Sigmoid colon (tissue), 7 donors: ENCODE measurements at regions of chr2 and their contacts with region 1.

Region 1: GRCh38 chr2:1817256-1818051 is 73.1 kb upstream of the PXDN start:
- DNase-seq: peak; percentile 98
- H3K4me3 ChIP-seq: peak overlapping the region in 1 of 4 donors; percentile 12
- H3K27ac ChIP-seq: peak overlapping the region; percentile 81 to 96 (median 94)
- H3K4me1 ChIP-seq: peaks cover 0 to 31% (median 28%) of the 10 kb centered on the region in 4 donors
- H3K27me3 ChIP-seq: no peaks in the 10 kb centered on the region
- CTCF ChIP-seq: peak; percentile 83 to 96 (median 93)
- EP300 ChIP-seq: peak; percentile 78 to 95 (median 87)
- POLR2A ChIP-seq: no peak

Region 2: DNA sequence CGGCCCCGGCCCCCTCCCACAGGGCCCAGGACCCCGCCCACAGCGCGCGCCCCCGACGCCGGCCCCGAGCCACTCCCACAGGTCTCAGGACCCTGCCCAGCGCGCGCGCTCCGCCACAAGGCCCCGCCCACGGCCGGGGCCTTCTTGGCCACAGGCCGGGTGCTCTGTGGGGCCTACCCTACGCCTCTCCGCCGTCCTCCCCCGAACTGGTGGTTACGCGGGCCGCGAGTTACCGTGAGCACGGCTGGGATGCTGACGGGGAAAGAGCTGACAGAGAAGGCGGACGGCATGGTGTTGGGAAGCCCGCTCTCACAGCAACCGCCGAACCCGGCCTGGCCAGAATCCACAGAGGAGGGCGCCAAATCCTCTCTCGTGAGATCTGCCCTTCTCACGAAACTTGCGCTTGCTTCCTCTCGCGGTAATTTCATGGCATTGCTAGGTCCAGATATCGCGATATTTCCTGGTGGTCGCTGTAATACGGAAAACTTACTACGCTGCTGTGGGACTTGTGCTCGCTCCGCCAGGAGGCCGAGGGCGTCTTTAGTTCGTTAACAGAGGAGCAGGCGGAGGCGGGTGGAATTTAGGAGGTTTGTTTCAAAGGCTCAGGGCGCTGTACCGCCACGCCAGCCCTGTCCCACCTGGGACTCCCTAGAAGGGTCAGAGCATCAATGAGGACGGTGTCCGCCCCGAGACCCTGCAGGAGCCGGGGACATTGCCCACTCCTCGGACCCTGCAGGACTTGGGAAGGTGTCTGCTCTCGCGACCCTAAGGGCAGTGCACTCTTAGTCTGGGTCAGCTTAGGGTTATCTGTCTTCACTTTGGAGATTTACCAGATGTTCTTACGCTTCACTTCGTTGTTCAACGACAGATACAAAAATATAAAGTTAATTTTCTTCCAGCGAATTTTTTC is 1140.1 kb before region 1 on chr2 and contains the start of gene TMEM18:
- intact Hi-C with region 1: loop called (anchors 5 kb)
- DNase-seq: peak; percentile 98
- H3K4me3 ChIP-seq: peak within 1 kb of the TSS; percentile 87 to 94 (median 88)
- H3K27ac ChIP-seq: peak within 1 kb of the TSS; percentile 98 to 100 (median 98)
- H3K4me1 ChIP-seq: peaks cover 0 to 24% (median 13%) of the 10 kb centered on the region in 4 donors
- H3K27me3 ChIP-seq: no peaks in the 10 kb centered on the region
- CTCF ChIP-seq: peak in 2 of 4 experiments; percentile 13 to 30
- EP300 ChIP-seq: no peak
- POLR2A ChIP-seq: peak; percentile 75 to 84
- total RNA-seq, gene TMEM18: 14.4 to 26.8 (median 21.9) TPM

Region 3: DNA sequence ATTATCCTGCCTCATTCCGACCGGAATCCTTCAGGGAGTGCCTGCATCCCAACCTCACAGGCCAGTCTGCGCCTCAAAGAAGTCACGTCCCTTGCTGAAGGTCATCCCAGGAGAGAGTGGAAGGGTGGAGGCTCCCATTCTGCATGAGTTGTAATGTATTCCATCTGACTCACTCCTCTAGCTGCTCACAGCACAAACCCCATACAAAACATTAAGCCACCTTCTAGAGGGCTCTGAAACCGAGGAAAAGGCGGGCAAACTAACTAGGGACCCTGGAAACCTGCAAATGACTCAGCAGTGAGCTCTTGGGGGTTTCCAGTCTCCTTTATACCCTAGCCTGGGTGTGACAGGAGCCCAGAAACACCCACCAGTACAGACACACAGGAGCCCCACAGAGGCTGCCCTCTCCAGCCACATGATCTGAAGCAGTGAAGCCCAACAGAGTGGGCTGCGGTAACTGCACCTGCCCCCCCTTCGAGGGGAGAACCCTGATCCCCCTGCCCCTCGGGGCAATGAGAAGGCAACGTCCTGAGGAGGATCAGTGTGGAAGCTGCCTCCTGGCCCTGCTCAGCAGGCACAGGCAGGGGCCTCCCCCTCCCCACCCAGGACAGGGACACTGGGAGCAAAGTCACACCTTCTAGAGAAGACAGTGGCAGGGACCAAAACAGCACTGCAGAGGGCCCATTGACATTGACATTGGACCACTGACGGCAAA is 936.1 kb before region 1 on chr2:
- intact Hi-C with region 1: no loop called
- DNase-seq: no peak
- H3K4me3 ChIP-seq: no peak overlapping the region
- H3K27ac ChIP-seq: no peak overlapping the region
- H3K4me1 ChIP-seq: peaks cover 0 to 8% (median 4%) of the 10 kb centered on the region in 4 donors
- H3K27me3 ChIP-seq: peaks cover 0 to 55% (median 3%) of the 10 kb centered on the region in 3 donors
- CTCF ChIP-seq: no peak
- EP300 ChIP-seq: no peak
- POLR2A ChIP-seq: no peak

Region 4: GRCh38 chr2:1591978-1592907 is 225.2 kb before region 1 on chr2:
- intact Hi-C with region 1: loop called (anchors 2 kb)
- DNase-seq: peak; percentile 92
- H3K4me3 ChIP-seq: peak overlapping the region in 1 of 4 donors; percentile 2
- H3K27ac ChIP-seq: peak overlapping the region in 3 of 4 donors; percentile 30 to 70 (median 57)
- H3K4me1 ChIP-seq: peaks cover 0 to 36% (median 25%) of the 10 kb centered on the region in 4 donors
- H3K27me3 ChIP-seq: no peaks in the 10 kb centered on the region
- CTCF ChIP-seq: peak; percentile 68 to 87 (median 84)
- EP300 ChIP-seq: no peak
- POLR2A ChIP-seq: no peak

Region 5: DNA sequence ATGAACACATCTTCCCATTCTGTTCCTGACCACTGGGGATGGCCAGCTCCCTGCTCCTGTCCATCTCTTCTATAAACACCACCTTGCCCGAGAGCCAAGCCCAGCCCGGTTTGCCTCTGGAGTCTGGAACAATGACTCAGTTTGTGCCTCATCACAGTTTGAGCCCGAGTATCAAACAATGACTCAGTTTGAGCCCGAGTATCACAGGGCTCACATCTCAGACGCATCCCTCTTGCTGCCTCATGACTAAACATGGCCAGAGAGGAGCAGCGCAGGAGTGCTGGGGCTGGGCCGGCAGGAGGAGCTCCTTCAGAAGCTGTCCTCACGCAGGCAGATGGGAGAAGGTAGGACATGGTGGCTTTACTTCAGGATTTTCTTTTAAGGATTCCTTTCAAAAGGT is 141.8 kb before region 1 on chr2:
- intact Hi-C with region 1: loop called (anchors 2 kb)
- DNase-seq: peak; percentile 95
- H3K4me3 ChIP-seq: no peak overlapping the region
- H3K27ac ChIP-seq: peak overlapping the region; percentile 80 to 95 (median 86)
- H3K4me1 ChIP-seq: peaks cover 0 to 40% (median 27%) of the 10 kb centered on the region in 4 donors
- H3K27me3 ChIP-seq: no peaks in the 10 kb centered on the region
- CTCF ChIP-seq: peak; percentile 37 to 62 (median 45)
- EP300 ChIP-seq: peak in 2 of 4 donors; percentile 22 to 88
- POLR2A ChIP-seq: no peak

Region 6: GRCh38 chr2:1791685-1792435 is 25.6 kb before region 1 on chr2:
- intact Hi-C with region 1: loop called (anchors 1 kb)
- DNase-seq: peak; percentile 88
- H3K4me3 ChIP-seq: peak overlapping the region in 1 of 4 donors; percentile 6
- H3K27ac ChIP-seq: peak overlapping the region; percentile 61 to 86 (median 80)
- H3K4me1 ChIP-seq: peaks cover 0 to 30% (median 23%) of the 10 kb centered on the region in 4 donors
- H3K27me3 ChIP-seq: no peaks in the 10 kb centered on the region
- CTCF ChIP-seq: no peak
- EP300 ChIP-seq: peak in 2 of 4 donors; percentile 26
- POLR2A ChIP-seq: no peak